Cardiac septum (tissue), 1 donor: ENCODE measurements at regions of chr4 and their contacts with region 1.

Region 1: DNA sequence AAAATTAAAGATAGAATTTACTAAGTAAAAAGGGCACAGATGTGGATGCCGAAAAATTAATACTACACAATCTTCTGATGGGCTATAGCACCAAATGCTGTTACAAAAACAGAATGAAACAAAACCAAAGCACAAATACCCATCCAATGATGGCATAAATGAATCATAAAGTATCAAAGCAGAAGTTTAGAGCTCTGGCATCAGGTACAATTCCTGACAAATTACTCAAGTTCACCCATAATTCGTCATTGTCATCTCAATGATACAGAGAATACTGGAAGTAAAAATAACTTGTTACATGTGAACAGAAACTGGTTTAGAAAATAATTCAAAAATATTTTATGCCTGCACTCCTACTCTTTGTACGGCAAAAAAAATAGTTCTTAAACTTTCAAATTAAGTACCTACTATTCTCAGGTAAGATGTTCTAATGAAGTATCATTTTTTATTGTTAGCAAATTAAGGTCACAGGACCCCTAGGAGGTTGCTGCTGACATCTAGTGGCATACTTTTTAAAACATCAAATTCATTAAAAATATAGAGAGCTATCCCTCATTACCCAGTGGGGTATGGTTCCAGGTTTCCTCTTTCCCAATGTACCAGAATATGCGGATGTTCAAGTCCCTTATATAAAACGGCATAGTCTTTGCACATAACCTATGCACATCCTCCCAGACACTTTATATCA is 126.1 kb downstream of the INPP4B start:
- DNase-seq: no peak

Region 2: GRCh38 chr4:142126890-142127497 is 593.0 kb before region 1 on chr4:
- intact Hi-C with region 1: loop called (anchors 5 kb)
- DNase-seq: no peak